Mammary epithelial cell (primary cell): ENCODE measurements at regions of chr18 and their contacts with region 1.

Region 1: GRCh38 chr18:46660955-46661749 is 4.1 kb upstream of the LOXHD1 start:
- DNase-seq: no peak
- H3K4me3 ChIP-seq: no peak overlapping the region
- H3K27ac ChIP-seq: no peak overlapping the region
- H3K4me1 ChIP-seq: peaks cover 6% of the 10 kb centered on the region
- H3K27me3 ChIP-seq: no peaks in the 10 kb centered on the region
- CTCF ChIP-seq: no peak

Region 2: DNA sequence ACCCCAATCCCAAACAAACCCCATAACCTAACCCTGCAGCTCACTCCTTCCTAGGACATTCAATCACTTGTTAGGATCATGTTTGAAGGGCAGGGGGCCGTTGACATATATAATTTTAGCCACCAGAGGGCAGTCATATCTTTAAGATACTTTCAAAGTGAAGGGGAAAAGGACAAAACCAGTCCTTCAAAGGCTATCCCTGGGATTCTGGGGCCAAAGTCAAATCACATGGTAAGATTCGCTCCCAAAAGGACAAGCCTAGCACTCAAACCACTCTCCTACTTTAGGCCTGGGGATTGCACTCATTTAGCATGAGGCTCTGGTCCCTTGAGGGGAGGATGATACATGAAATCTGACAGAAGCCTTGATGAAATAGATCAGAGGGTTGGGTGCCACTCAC is 512.3 kb before region 1 on chr18:
- CTCF ChIA-PET with region 1: no interaction called
- dilution Hi-C with region 1: loop called (anchors 5 kb)
- in situ Hi-C with region 1: loop called (anchors 5 to 10 kb)
- intact Hi-C with region 1: loop called (anchors 1 kb)
- DNase-seq: peak; percentile 42
- H3K4me3 ChIP-seq: no peak overlapping the region
- H3K27ac ChIP-seq: no peak overlapping the region
- H3K4me1 ChIP-seq: peaks cover 23% of the 10 kb centered on the region
- H3K27me3 ChIP-seq: no peaks in the 10 kb centered on the region
- CTCF ChIP-seq: peak; percentile 63 to 73

Region 3: DNA sequence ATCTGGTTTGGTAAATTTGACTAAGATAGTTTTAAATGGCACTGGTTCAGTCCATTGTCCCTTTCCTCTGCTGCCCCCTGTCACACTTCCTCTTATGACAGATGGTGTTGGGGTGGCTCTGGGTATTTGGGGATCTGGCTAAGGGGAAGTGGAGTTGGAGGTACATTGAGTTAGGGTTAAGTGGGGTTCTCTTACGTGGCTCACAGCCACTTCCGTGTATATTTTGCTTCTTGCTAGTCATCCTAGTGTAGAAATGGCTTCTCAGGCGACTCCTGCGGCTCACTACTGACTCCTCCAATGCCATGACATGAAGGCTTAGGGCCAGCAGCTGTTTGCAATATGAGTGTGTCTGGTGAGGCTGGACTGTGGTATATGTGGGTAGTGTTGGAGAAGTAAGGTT is 370.0 kb before region 1 on chr18:
- CTCF ChIA-PET with region 1: no interaction called
- dilution Hi-C with region 1: no loop called
- in situ Hi-C with region 1: loop called (anchors 10 kb)
- intact Hi-C with region 1: no loop called
- DNase-seq: no peak
- H3K4me3 ChIP-seq: no peak overlapping the region
- H3K27ac ChIP-seq: no peak overlapping the region
- H3K4me1 ChIP-seq: no peaks in the 10 kb centered on the region
- H3K27me3 ChIP-seq: no peaks in the 10 kb centered on the region
- CTCF ChIP-seq: no peak

Region 4: GRCh38 chr18:46445914-46446313 is 215.2 kb before region 1 on chr18:
- CTCF ChIA-PET with region 1: no interaction called
- dilution Hi-C with region 1: no loop called
- in situ Hi-C with region 1: no loop called
- intact Hi-C with region 1: loop called (anchors 10 kb)
- DNase-seq: no peak
- H3K4me3 ChIP-seq: no peak overlapping the region
- H3K27ac ChIP-seq: no peak overlapping the region
- H3K4me1 ChIP-seq: no peaks in the 10 kb centered on the region
- H3K27me3 ChIP-seq: no peaks in the 10 kb centered on the region
- CTCF ChIP-seq: peak in 1 of 2 donors; percentile 30

Region 5: DNA sequence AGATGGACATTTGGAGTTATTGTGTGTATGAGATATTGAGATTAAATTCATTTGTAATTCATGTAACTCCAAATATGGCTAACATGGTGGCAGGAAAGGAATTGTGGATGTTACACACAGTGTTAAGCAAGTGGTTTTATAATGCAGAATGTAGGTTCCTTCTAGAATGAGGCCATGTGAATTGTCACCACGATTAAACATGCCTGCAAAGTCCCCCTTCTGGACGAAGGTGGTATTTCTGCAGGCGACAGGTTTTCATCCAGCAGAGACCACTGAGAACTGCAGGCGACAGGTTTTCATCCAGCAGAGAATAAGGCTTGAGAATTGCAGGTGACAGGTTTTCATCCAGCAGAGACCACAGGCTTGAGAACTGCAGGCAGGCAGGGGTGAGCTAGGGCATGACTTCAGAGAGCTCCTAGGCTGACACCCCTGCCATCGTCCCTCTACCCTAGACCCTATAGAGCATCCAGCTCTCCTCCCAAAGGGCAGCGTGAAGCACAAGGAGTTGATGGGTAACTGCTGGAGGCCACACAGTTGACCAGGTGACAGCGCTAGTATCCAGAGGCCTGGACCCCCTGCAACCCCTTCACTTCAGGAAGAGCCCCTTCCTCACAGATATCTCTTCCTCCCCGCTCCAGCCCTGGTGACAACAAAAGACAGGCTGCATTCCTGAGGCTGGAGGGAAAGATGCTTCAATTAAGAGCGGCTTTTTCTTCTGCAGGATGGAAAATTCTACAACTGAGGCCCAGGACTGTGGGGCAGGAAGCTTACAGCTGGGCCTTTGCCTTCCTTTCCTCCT is 179.9 kb before region 1 on chr18:
- CTCF ChIA-PET with region 1: no interaction called
- dilution Hi-C with region 1: no loop called
- in situ Hi-C with region 1: no loop called
- intact Hi-C with region 1: loop called (anchors 10 kb)
- DNase-seq: no peak
- H3K4me3 ChIP-seq: no peak overlapping the region
- H3K27ac ChIP-seq: no peak overlapping the region
- H3K4me1 ChIP-seq: no peaks in the 10 kb centered on the region
- H3K27me3 ChIP-seq: no peaks in the 10 kb centered on the region
- CTCF ChIP-seq: peak; percentile 65

Region 6: DNA sequence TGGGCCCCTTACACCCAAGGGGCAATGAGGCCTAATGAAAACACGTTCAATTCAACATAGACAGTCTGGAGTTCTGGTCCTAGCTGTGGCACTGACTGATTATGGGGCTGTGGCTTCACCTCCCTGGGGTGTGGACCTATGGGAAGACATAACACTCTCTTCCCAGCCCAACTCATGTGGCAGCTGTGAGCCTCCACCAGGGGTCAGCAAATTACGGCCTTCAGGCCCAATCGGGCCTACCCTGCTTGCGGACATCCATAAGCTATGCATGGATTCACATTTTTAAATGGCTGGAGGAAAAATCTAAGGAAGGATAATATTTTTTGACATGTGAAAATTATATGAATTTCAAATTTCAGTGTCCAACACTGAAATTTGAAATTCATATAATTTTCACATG is 105.4 kb before region 1 on chr18:
- CTCF ChIA-PET with region 1: no interaction called
- dilution Hi-C with region 1: no loop called
- in situ Hi-C with region 1: no loop called
- intact Hi-C with region 1: loop called (anchors 1 kb)
- DNase-seq: no peak
- H3K4me3 ChIP-seq: no peak overlapping the region
- H3K27ac ChIP-seq: no peak overlapping the region
- H3K4me1 ChIP-seq: no peaks in the 10 kb centered on the region
- H3K27me3 ChIP-seq: no peaks in the 10 kb centered on the region
- CTCF ChIP-seq: peak; percentile 40 to 54